SK-MEL-5 (cell line): ENCODE measurements at regions of chr6 and their contacts with region 1.

Region 1: DNA sequence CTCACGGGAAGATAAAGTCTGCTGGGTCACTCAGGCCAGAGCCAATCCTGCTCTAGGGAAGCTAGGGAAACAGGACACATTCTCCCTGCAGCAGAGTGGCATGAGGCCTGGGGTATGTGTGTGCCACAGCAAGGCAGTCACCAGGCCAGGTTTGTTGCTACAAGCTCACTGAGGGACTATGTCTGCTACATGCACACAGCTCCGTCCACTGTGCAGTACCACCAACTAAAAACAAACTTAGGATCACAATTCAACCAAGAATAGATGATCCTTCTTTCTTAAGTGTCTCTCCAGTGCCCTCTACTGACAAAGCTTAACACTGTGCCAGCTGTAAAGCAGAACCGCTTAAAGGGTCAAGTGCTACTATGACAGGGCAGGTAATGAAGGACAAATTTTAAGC is 192.5 kb downstream of the PTPRK start:
- DNase-seq: peak; percentile 61

Region 2: GRCh38 chr6:127855542-127856159 is 472.2 kb before region 1 on chr6:
- in situ Hi-C with region 1: loop called (anchors 25 kb)
- DNase-seq: peak; percentile 55

Region 3: DNA sequence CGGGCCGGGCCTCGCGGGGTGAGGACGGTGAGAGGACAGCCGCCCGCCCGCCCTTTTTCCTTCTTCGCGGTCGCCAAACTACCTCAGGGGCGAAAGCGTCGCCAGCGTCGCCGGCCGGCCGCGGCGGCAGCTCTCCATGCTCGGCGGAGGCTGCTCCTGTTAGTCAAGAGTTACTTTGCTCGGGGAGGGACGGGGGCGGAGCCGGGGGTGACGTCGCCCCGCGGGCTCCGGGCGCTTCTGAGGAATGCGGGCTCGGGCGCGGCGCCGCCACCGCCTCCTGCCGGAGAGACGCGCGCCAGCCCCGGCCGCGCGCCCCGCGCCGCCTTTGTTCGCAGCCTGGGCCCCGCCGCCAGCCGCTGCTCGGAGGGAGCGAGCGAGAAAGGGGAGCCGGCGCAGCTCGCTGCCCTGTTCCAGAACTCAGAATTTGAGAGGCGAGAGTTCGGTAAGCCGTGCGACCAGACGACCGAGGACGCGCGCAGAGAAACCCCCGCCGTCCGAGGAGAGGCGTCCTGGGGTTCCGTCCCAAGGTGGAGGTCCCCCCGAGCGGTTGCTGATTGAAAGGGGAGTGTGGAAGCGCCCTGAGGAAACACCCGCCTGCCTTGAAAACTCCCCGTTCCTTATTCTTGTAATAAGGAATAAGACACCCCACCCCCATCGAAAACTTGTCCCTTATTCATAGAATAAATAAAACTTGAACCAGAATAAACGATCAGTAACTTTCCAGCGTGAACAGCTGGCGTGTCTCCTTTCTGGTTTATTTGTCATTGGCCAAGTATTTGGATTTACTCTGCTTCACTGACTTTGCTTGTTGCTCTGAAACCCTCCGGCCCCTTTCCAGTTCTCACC is 192.8 kb after region 1 on chr6 and contains the start of gene PTPRK:
- in situ Hi-C with region 1: loop called (anchors 25 kb)
- DNase-seq: peak; percentile 87
- total RNA-seq, gene PTPRK: 25.5 and 36.5 TPM in 2 replicates